ENCODE measurements at regions of chr13 and their contacts with region 1.

Region 1: DNA sequence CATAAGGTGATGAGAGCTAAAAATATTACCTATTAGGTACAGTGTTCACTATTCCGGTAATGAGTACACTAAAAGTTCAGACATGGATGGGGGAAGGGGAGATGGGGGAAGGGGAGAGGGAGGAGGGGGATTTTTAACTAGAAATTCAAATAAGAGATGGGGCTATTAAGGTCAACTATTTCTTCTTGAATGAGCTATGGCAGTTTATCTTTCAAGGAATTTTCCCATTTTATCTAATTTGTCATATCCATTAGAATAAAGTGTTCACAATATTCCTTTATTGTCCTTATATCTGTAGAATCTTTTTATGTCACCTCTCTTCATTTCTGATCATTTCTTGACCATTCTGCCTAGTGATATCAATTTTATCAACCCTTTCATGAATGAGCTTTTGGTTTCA is 362.4 kb downstream of the SUCLA2 start:
- DNase-seq: no peak
- ATAC-seq: no peak
- H3K4me3 ChIP-seq: no peak overlapping the region
- H3K4me3 Mint-ChIP-seq: no peak overlapping the region
- H3K27ac ChIP-seq: no peak overlapping the region
- H3K27ac Mint-ChIP-seq: no peak overlapping the region
- H3K4me1 ChIP-seq: no peaks in the 10 kb centered on the region
- H3K4me1 Mint-ChIP-seq: no peaks in the 10 kb centered on the region
- H3K27me3 ChIP-seq: no peaks in the 10 kb centered on the region
- H3K27me3 Mint-ChIP-seq: no peaks in the 10 kb centered on the region
- CTCF ChIP-seq: no peak

Region 2: DNA sequence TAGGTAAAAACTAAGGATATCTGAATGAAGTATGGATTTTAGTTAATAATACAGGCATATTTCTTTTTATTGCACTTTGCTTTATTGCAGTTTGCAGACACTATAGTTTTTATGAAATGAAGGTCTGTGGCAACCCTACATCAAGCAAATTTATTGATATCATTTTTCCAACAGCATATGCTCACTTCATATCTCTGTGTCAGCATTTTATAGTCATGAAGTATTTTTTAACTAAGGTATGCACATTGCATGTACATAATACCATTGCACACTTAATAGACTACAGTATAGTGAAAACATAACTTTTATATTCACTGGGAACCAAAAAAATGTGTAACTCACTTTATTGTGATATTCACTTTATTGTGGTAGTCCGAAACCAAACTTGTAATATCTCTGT is 126.2 kb after region 1 on chr13:
- CTCF ChIA-PET with region 1: no interaction called
- POLR2A ChIA-PET with region 1: interaction called, 12 read pairs
- intact Hi-C with region 1: no loop called
- DNase-seq: no peak
- ATAC-seq: no peak
- H3K4me3 ChIP-seq: no peak overlapping the region
- H3K4me3 Mint-ChIP-seq: no peak overlapping the region
- H3K27ac ChIP-seq: no peak overlapping the region
- H3K27ac Mint-ChIP-seq: no peak overlapping the region
- H3K4me1 ChIP-seq: no peaks in the 10 kb centered on the region
- H3K4me1 Mint-ChIP-seq: no peaks in the 10 kb centered on the region
- H3K27me3 ChIP-seq: no peaks in the 10 kb centered on the region
- H3K27me3 Mint-ChIP-seq: peaks cover 12% of the 10 kb centered on the region
- CTCF ChIP-seq: no peak

Measured in B cell (primary cell).